Caco-2 (cell line): ENCODE measurements at regions of chr5 and their contacts with region 1.

Region 1: DNA sequence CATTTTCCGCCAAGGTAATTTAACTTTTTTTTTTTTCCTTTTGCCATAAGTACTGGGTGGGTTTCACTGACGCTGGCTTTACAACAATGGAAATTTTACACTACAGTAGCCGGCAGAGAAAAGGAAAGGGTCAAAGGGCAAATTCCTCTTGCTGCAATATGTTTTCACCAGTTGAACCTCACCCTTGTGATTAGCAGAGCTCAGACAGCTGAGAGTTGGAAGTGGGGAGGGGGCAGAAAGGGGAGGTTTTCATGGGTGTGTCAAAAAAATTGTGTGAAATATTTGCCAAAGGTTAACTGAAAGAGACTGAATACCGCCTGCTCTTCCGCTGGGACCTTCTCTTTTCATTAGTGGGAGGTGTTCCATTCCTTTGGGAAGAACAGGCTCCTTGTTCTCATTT is 296.9 kb downstream of the ADAMTS6 start:
- DNase-seq: peak; percentile 77 to 84
- H3K4me3 ChIP-seq: no peak overlapping the region
- H3K4me3 Mint-ChIP-seq: peak overlapping the region; percentile 57
- H3K27ac Mint-ChIP-seq: peak overlapping the region; percentile 84
- H3K4me1 ChIP-seq: peaks cover 19% of the 10 kb centered on the region
- H3K4me1 Mint-ChIP-seq: peaks cover 30% of the 10 kb centered on the region
- H3K27me3 ChIP-seq: no peaks in the 10 kb centered on the region
- H3K27me3 Mint-ChIP-seq: no peaks in the 10 kb centered on the region
- CTCF ChIP-seq: no peak

Region 2: GRCh38 chr5:65142511-65143011 is 42.2 kb before region 1 on chr5:
- CTCF ChIA-PET with region 1: no interaction called
- POLR2A ChIA-PET with region 1: no interaction called
- intact Hi-C with region 1: loop called (anchors 1 kb)
- DNase-seq: no peak
- H3K4me3 ChIP-seq: no peak overlapping the region
- H3K4me3 Mint-ChIP-seq: no peak overlapping the region
- H3K27ac Mint-ChIP-seq: no peak overlapping the region
- H3K4me1 ChIP-seq: peaks cover 13% of the 10 kb centered on the region
- H3K4me1 Mint-ChIP-seq: no peaks in the 10 kb centered on the region
- H3K27me3 ChIP-seq: no peaks in the 10 kb centered on the region
- H3K27me3 Mint-ChIP-seq: no peaks in the 10 kb centered on the region
- CTCF ChIP-seq: no peak

Region 3: GRCh38 chr5:66074901-66075300 is 890.1 kb after region 1 on chr5:
- CTCF ChIA-PET with region 1: no interaction called
- POLR2A ChIA-PET with region 1: interaction called, 12 read pairs
- intact Hi-C with region 1: no loop called
- DNase-seq: no peak
- H3K4me3 ChIP-seq: no peak overlapping the region
- H3K4me3 Mint-ChIP-seq: no peak overlapping the region
- H3K27ac Mint-ChIP-seq: no peak overlapping the region
- H3K4me1 ChIP-seq: no peaks in the 10 kb centered on the region
- H3K4me1 Mint-ChIP-seq: no peaks in the 10 kb centered on the region
- H3K27me3 ChIP-seq: no peaks in the 10 kb centered on the region
- H3K27me3 Mint-ChIP-seq: no peaks in the 10 kb centered on the region
- CTCF ChIP-seq: no peak